MCF 10A (cell line): ENCODE measurements at regions of chr5 and their contacts with region 1.

Region 1: GRCh38 chr5:34608859-34609648 is 47.1 kb upstream of the RAI14 start:
- DNase-seq: peak; percentile 89
- H3K4me3 Mint-ChIP-seq: peak overlapping the region; percentile 32
- H3K27ac Mint-ChIP-seq: peak overlapping the region; percentile 56
- H3K4me1 Mint-ChIP-seq: peaks cover 14% of the 10 kb centered on the region
- H3K27me3 Mint-ChIP-seq: no peaks in the 10 kb centered on the region
- CTCF ChIP-seq: no peak

Region 2: DNA sequence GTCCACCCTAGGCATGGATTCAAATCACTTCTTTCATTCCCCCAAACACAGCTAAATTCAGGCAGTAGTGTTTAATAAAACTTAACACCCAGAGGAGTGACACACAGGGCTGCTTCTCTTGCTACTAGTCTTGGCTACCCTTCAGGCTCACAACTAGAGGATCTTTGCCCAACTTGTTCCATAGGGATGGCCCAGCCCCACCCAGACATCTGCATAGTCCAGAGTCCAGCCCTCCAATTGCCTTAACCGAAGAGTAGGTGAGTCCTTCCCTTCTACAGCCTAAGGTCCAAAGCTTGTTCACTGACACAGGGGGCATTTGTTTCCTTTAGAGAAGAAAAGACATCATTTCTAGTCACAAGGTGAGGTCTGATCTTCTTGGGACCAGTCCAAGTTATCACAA is 688.1 kb before region 1 on chr5:
- CTCF ChIA-PET with region 1: no interaction called
- POLR2A ChIA-PET with region 1: no interaction called
- intact Hi-C with region 1: no loop called
- DNase-seq: no peak
- H3K4me3 Mint-ChIP-seq: no peak overlapping the region
- H3K27ac Mint-ChIP-seq: no peak overlapping the region
- H3K4me1 Mint-ChIP-seq: no peaks in the 10 kb centered on the region
- H3K27me3 Mint-ChIP-seq: no peaks in the 10 kb centered on the region
- CTCF ChIP-seq: no peak

Region 3: DNA sequence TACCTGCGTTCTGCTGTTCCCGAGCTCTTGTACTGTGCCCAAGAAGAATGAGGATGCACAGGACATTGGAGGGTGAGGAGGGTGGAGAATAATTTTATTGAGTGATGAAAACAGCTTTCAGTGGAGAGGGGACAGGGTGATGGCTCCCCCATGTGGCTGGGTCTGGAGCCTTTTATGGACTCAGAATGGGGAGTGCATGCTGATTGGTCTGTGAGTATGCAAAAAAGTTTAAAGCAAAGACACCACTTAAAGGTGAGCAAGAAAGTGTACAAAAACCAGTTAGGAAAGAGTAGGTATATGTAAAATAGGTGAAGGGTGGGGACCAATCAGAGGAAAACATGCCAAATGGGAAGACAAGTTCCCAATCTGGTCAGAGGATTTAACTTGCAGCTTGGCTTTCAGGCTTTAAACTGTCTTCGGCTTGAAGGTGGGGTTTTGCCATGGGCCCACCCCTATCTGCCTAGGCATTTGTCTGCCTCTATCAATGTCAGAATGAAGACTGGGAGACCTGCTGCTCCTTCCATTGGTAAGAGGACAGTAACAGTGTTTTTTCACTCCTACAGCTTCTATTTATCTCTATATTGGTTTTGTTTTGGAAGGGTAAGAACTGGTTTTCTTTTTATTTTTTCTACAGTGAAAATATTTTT is 70.9 kb before region 1 on chr5:
- CTCF ChIA-PET with region 1: no interaction called
- POLR2A ChIA-PET with region 1: no interaction called
- intact Hi-C with region 1: loop called (anchors 5 kb)
- DNase-seq: peak; percentile 54
- H3K4me3 Mint-ChIP-seq: no peak overlapping the region
- H3K27ac Mint-ChIP-seq: no peak overlapping the region
- H3K4me1 Mint-ChIP-seq: peaks cover 26% of the 10 kb centered on the region
- H3K27me3 Mint-ChIP-seq: no peaks in the 10 kb centered on the region
- CTCF ChIP-seq: no peak